Tibial artery (tissue), 4 donors: ENCODE measurements at regions of chr5 and their contacts with region 1.

Region 1: DNA sequence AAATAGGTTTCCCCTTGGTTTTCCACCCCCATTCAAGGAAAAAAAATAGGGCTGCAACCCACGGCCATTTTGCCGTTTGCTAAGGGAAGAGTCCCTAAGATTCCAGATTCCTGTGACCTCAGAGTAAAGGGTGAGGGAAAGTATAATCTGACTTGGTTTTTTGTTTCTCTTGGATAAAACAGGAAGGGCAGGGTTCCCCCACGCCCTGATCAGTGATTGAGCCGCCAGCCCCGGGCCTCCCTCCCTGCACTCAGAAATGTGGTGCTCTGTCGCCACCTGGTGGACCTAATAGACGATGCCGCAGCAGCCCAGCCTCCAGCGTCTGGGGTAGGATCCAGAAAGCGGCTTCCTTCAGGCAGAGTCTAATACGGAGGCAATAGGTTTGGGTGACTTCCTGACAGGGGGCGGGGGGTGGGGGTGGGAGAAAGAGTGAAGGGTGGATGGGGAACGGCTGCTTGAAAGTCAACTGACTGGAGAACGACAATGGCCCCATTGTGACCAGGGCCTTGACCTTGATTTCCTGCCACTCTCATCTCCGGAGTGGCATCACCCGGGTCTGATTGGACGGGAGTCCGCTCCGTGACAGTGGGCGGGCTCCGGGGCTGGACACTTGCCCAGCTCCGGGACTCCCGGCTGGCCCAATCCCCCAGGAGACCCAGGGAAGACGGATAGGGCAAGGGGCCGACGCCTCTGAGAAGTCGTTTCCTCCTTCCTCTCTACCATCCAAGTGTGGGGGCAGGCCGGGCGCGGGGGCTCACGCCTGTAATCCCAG is 17.8 kb upstream of the CYSTM1 start:
- DNase-seq: peak; percentile 87 to 90
- H3K4me3 ChIP-seq: peak overlapping the region; percentile 7 to 50
- H3K27ac ChIP-seq: no peak overlapping the region
- H3K4me1 ChIP-seq: peaks cover 0 to 20% (median 4%) of the 10 kb centered on the region in 4 donors
- H3K27me3 ChIP-seq: no peaks in the 10 kb centered on the region
- CTCF ChIP-seq: peak; percentile 88 to 94

Region 2: GRCh38 chr5:140073296-140073695 is 83.9 kb before region 1 on chr5:
- intact Hi-C with region 1: loop called (anchors 2 kb)
- DNase-seq: no peak
- H3K4me3 ChIP-seq: no peak overlapping the region
- H3K27ac ChIP-seq: no peak overlapping the region
- H3K4me1 ChIP-seq: no peaks in the 10 kb centered on the region
- H3K27me3 ChIP-seq: peaks cover 0 to 5% of the 10 kb centered on the region in 2 donors
- CTCF ChIP-seq: peak; percentile 61 to 66

Region 3: DNA sequence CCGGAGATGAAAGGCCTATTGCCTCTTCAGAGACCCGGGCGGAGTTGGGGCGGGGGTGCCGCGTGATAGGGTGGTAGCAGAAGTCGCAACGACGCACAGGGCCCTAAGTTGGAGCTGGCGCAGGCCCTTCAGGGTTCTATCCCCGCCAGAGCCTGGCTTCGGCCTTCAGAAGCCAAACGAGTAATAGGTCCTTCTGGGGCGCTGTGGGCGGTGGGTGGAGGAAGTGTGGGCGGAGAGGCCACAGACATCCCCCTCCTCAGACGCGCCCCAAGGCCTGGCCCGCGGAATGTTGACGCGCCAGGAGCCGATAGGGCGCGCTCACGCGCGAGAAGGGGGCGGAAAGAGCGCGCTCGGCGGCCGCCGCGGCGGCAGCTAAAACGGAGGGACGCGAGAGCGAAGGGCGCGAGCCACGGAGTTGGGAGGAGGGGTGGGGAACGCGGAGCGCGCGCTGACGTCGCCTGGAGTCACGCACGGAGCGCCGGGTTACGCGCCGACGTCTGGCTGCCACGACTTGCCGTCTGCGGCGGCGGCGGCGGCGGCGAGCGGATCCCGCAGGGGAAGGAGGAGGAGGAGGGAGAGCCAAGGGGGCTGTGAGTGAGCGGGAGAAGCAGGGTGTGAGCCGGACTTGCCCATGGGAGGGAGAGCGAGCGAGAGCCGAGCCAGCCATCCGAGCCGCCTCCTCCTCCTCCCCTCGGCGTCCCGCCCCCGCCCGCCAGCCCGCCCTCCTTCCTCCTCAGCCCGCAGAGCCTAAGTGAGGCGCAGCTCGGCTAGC is 49.7 kb before region 1 on chr5:
- intact Hi-C with region 1: loop called (anchors 10 kb)
- DNase-seq: peak; percentile 86 to 95
- H3K4me3 ChIP-seq: peak overlapping the region; percentile 77 to 83
- H3K27ac ChIP-seq: peak overlapping the region; percentile 99
- H3K4me1 ChIP-seq: peaks cover 0 to 36% (median 24%) of the 10 kb centered on the region in 4 donors
- H3K27me3 ChIP-seq: no peaks in the 10 kb centered on the region
- CTCF ChIP-seq: peak; percentile 17 to 25